WTC11 (cell line): ENCODE measurements at regions of chr7 and their contacts with region 1.

Region 1: GRCh38 chr7:140439359-140439758 is 35.5 kb downstream of the RAB19 start:
- DNase-seq: no peak
- ATAC-seq: no peak
- H3K4me3 Mint-ChIP-seq: no peak overlapping the region
- H3K27ac Mint-ChIP-seq: no peak overlapping the region
- H3K4me1 Mint-ChIP-seq: no peaks in the 10 kb centered on the region
- H3K27me3 Mint-ChIP-seq: no peaks in the 10 kb centered on the region
- CTCF ChIP-seq: no peak

Region 2: GRCh38 chr7:140417456-140418155 is 21.8 kb before region 1 on chr7:
- CTCF ChIA-PET with region 1: interaction called, 11 read pairs
- POLR2A ChIA-PET with region 1: no interaction called
- DNase-seq: no peak
- ATAC-seq: no peak
- H3K4me3 Mint-ChIP-seq: no peak overlapping the region
- H3K27ac Mint-ChIP-seq: no peak overlapping the region; the same call in 1 of the 2 replicates
- H3K4me1 Mint-ChIP-seq: no peaks in the 10 kb centered on the region
- H3K27me3 Mint-ChIP-seq: no peaks in the 10 kb centered on the region
- CTCF ChIP-seq: no peak

Region 3: DNA sequence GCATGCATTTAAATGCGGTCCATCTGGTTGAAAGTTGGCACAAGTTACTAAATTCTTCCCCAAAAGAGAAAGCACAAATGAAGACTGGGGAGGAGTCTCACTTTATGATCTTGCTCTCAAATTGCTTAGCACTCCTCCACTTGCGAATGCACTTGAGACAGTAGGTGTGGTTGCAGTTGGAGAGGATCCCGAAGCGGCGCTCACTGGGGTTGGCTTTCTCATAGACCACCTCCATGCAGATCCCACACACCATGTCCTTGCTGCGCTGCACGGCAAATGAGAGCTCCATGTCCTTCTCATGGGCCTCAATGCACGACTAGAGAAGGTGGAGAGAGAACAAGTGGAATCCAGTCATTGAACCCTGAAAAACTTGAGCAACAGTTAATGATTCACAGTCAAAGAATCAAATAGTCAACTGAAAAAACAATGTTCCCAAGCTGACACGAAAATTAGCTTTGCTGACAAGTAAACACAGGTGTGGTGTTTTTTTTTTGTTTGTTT is 17.2 kb after region 1 on chr7:
- CTCF ChIA-PET with region 1: interaction called, 22 read pairs
- POLR2A ChIA-PET with region 1: no interaction called
- DNase-seq: no peak
- ATAC-seq: no peak
- H3K4me3 Mint-ChIP-seq: peak overlapping the region; percentile 20; the same call in 1 of the 2 replicates
- H3K27ac Mint-ChIP-seq: peak overlapping the region; percentile 98
- H3K4me1 Mint-ChIP-seq: peaks cover 76% of the 10 kb centered on the region
- H3K27me3 Mint-ChIP-seq: no peaks in the 10 kb centered on the region
- CTCF ChIP-seq: no peak